A549 (cell line): ENCODE measurements at regions of chr3 and their contacts with region 1.

Region 1: DNA sequence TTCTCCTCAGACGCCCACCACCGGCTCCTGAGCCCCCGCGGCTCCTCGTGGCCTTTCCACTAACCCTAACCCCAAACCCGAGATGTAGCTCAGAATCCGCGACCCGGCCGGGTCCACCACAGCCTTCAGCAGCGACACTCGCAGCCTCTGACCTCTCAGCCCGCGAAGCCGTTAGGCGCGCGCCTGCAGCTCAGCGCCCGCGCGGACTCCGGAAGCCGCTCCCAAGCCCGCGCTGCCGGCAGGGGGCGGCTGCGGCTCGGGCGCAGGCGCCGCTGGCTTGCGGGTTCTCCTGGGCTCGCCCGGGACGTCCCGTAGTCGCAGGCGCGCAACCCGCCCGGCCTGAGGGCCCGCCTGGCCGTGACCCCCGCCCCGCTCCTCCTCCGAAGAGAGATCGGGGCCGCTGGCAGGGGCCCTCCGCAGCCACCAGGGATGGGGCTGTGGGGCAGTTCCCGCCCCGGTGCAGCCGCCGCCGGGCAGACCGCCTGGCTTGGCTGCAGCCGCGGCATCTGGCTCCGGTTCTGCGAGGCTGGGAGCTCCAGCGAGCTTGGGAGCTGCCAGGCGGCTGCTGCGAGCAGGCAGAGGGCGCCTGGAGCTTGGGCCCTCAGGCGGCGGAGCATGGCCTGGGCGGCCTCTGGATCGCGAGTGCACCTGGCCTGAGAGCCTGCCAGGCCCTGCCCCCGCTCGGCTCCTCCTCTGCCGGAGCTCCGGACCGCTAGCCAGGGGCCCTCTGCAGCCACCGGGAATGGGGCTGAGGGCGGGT is 120.7 kb downstream of the LMLN start:
- DNase-seq: peak; percentile 10 to 57
- ATAC-seq: peak; percentile 97 to 98
- H3K4me3 ChIP-seq: peak overlapping the region; percentile 49
- H3K27ac ChIP-seq: peak overlapping the region; percentile 27 to 62; a peak in 2 of 6 replicates
- H3K4me1 ChIP-seq: peaks cover 7% of the 10 kb centered on the region; the same call in 2 of the 3 replicates
- CTCF ChIP-seq: peak; percentile 48
- EP300 ChIP-seq: no peak
- POLR2A ChIP-seq: no peak
- RAD21 ChIP-seq: 0 out of 5 replicates have a peak, but pooled peaks of 1 of the 2 experiments have one; percentile 28

Region 2: DNA sequence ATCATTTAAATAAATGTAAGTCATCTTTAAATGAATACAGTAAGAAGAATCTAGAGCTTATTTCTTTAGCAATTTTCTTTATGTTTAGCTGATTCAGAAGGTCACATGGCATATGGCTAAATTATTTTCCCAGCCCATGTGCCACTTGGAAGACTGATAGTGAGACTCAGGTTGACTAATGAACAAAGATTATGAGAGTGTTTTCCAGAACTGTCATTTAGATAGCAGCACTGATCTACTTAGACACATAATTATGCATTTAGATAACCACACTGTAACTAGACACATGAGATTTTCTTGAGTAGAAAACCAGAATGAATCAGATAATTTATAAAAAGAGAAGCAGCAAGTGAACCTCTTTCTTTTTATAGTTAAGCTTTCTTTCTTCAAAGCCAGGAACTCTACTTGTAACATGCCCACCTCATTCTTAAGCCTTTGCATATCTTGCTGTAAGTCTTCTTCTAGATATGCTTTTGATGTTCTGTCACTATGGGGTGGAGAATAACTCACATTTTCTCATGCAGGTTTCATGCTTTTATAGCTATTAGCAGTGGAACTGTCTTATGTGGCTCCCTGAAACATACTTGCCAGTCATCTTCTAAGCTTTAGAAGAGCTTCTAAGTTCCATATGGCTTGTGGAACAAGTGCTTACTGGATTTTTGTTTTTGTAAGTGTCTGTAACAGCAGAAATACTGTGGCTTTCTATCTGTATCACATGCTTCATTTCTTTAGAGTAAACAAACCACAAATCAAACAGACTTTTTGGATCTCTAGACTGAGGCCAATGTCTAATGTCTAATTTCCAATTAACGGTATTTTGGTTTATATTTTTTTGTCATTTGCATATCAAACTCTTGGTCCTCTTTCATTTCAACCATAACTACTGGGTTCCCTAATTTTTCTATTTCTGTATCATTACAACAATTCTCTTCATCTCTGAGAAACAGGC is 19.3 kb before region 1 on chr3:
- CTCF ChIA-PET with region 1: interaction called, 17 read pairs
- POLR2A ChIA-PET with region 1: no interaction called
- DNase-seq: no peak
- ATAC-seq: no peak
- H3K4me3 ChIP-seq: no peak overlapping the region
- H3K27ac ChIP-seq: no peak overlapping the region
- H3K4me1 ChIP-seq: no peaks in the 10 kb centered on the region
- CTCF ChIP-seq: no peak
- EP300 ChIP-seq: no peak
- POLR2A ChIP-seq: no peak
- RAD21 ChIP-seq: no peak

Region 3: DNA sequence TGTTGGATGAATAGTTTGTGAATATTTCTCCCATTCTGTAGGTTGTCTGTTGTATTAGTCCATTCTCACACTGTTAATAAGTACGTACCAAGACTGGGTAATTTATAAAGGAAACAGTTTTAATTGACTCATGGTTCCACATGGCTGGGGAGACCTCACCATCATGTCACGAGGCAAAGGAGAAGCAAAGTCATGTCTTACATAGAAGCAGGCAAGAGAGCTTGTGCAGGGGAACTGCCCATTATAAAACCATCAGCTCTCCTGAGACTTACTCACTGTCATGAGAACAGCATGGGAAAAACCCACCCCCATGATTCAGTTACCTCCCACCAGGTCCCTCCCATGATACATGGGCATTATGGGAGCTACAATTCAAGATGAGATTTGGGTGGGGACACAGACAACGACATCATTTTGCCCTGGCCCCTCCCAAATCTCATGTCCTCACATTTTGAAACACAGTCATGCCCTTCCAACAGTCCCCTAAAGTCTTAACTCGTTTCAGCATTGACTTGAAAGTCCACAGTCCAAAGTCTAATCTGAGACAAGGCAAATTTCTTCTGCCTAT is 12.5 kb after region 1 on chr3:
- CTCF ChIA-PET with region 1: interaction called, 23 read pairs
- POLR2A ChIA-PET with region 1: no interaction called
- DNase-seq: no peak
- ATAC-seq: no peak
- H3K4me3 ChIP-seq: no peak overlapping the region
- H3K27ac ChIP-seq: no peak overlapping the region
- H3K4me1 ChIP-seq: no peaks in the 10 kb centered on the region
- CTCF ChIP-seq: no peak
- EP300 ChIP-seq: no peak
- POLR2A ChIP-seq: no peak
- RAD21 ChIP-seq: no peak